Spleen (tissue), 13 donors: ENCODE measurements at regions of chr20 and their contacts with region 1.

Region 1: GRCh38 chr20:38875175-38875993 is 50.8 kb upstream of the FAM83D start:
- DNase-seq: peak; percentile 91
- H3K4me3 ChIP-seq: peak overlapping the region in 7 of 8 donors; percentile 0 to 58 (median 19)
- H3K27ac ChIP-seq: peak overlapping the region; percentile 72 to 93 (median 87)
- H3K4me1 ChIP-seq: peaks cover 63 to 100% (median 98%) of the 10 kb centered on the region in 6 donors
- H3K27me3 ChIP-seq: no peaks in the 10 kb centered on the region
- CTCF ChIP-seq: no peak
- POLR2A ChIP-seq: no peak

Region 2: DNA sequence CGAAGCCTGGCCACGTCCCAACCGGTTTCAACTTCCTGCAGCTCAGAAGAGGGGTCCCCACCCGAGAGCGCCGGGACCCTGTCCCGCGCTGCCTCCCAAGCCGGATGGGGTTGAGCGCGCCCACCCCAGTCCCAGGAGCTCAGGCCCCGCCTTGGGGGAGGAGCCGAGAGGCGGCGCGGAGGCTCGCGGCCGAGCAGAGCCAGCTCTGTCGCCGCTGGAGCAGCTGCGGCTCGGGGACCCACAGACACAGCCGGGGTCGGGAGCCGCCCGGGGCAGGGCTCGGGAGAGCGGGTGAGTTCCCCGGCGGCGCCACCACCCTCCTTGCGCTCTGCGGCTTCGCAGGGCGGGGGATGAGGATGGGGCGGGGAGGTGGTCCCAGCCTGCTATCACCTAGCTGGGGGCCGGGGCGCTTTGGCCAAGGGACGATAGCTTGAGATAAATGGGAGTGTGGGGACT is 69.9 kb before region 1 on chr20 and contains the start of gene PPP1R16B:
- intact Hi-C with region 1: loop called (anchors 10 kb)
- DNase-seq: peak; percentile 96
- H3K4me3 ChIP-seq: peak within 1 kb of the TSS; percentile 70 to 95 (median 82)
- H3K27ac ChIP-seq: peak within 1 kb of the TSS; percentile 73 to 98 (median 90)
- H3K4me1 ChIP-seq: peaks cover 32 to 68% (median 61%) of the 10 kb centered on the region in 6 donors
- H3K27me3 ChIP-seq: peaks cover 0 to 28% (median 5%) of the 10 kb centered on the region in 7 donors
- CTCF ChIP-seq: no peak
- POLR2A ChIP-seq: peak in 2 of 3 donors; percentile 59 to 77
- total RNA-seq, gene PPP1R16B: 35.7 to 66.0 (median 47.4) TPM